ENCODE measurements at regions of chr1 and their contacts with region 1.

Region 1: GRCh38 chr1:168439456-168440375 is 104.1 kb downstream of the XCL2 start:
- DNase-seq: peak; percentile 87
- H3K4me3 ChIP-seq: peak overlapping the region in 2 of 4 donors; percentile 8 to 20
- H3K27ac ChIP-seq: peak overlapping the region in 1 of 4 donors; percentile 29
- H3K4me1 ChIP-seq: peaks cover 0 to 22% (median 10%) of the 10 kb centered on the region in 4 donors
- H3K27me3 ChIP-seq: no peaks in the 10 kb centered on the region
- CTCF ChIP-seq: peak; percentile 67 to 77 (median 72)
- EP300 ChIP-seq: no peak
- POLR2A ChIP-seq: no peak

Region 2: DNA sequence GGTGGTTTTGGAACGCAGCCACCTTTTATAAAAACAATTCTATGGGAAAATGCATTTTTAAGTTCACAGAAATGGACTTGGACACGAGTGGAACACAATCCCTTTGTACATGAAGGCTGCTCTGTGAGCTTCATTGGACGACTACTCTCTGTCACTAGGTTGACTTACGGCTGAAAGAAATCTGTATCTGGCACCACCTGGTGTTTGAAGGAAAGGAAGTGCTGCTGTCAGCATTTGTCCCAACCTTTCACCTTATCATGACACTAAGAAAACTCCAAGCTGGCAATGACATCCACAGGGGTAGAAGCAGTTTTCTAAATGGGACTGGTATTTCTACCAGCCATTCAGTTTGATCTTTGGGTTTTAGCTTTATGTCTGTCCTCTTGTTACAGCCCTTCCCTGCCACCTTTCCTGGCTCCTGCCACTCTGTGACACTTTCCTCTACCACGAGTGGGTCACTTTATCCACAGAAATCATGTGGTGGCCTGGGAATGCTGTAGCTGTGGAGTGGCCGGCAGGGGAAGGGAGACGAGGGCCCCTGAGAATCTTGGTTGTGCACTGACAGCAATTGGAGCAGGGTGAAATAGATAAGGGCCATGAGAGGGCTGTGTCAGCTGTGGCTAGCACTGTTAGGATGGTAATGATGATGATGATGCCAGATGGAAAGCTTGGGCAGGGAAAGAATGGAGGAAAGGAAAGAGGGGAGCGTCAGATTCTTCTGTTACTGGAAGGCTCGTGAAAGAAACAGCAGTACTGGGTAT is 73.8 kb before region 1 on chr1:
- intact Hi-C with region 1: no loop called
- DNase-seq: no peak
- H3K4me3 ChIP-seq: no peak overlapping the region
- H3K27ac ChIP-seq: no peak overlapping the region
- H3K4me1 ChIP-seq: peaks cover 0 to 10% (median 8%) of the 10 kb centered on the region in 4 donors
- H3K27me3 ChIP-seq: no peaks in the 10 kb centered on the region
- CTCF ChIP-seq: no peak
- EP300 ChIP-seq: no peak
- POLR2A ChIP-seq: no peak

Region 3: GRCh38 chr1:168535536-168535935 is 95.8 kb after region 1 on chr1:
- intact Hi-C with region 1: no loop called
- DNase-seq: no peak
- H3K4me3 ChIP-seq: no peak overlapping the region
- H3K27ac ChIP-seq: no peak overlapping the region
- H3K4me1 ChIP-seq: no peaks in the 10 kb centered on the region
- H3K27me3 ChIP-seq: no peaks in the 10 kb centered on the region
- CTCF ChIP-seq: no peak
- EP300 ChIP-seq: no peak
- POLR2A ChIP-seq: no peak

Region 4: DNA sequence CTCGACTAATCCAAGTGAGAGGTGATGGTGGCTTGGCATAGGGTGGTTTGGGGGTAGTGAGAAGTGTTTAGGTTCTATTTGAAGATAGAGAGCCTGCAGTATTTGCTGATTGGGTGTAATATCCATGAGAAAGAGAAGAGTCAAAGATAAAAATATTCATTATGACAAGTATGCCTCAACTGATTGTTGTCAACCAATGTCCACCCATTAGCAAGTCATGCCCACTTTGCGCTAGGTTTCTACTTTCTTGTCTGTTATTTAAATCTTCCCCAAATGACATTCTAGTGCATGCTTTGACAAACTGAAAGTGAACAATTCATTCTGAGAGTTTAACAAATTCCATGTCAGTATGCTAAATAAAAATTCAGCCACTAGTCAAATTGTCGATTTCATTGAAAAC is 132.9 kb after region 1 on chr1:
- intact Hi-C with region 1: loop called (anchors 5 kb)
- DNase-seq: no peak
- H3K4me3 ChIP-seq: no peak overlapping the region
- H3K27ac ChIP-seq: no peak overlapping the region
- H3K4me1 ChIP-seq: no peaks in the 10 kb centered on the region
- H3K27me3 ChIP-seq: no peaks in the 10 kb centered on the region
- CTCF ChIP-seq: no peak
- EP300 ChIP-seq: no peak
- POLR2A ChIP-seq: no peak

Region 5: DNA sequence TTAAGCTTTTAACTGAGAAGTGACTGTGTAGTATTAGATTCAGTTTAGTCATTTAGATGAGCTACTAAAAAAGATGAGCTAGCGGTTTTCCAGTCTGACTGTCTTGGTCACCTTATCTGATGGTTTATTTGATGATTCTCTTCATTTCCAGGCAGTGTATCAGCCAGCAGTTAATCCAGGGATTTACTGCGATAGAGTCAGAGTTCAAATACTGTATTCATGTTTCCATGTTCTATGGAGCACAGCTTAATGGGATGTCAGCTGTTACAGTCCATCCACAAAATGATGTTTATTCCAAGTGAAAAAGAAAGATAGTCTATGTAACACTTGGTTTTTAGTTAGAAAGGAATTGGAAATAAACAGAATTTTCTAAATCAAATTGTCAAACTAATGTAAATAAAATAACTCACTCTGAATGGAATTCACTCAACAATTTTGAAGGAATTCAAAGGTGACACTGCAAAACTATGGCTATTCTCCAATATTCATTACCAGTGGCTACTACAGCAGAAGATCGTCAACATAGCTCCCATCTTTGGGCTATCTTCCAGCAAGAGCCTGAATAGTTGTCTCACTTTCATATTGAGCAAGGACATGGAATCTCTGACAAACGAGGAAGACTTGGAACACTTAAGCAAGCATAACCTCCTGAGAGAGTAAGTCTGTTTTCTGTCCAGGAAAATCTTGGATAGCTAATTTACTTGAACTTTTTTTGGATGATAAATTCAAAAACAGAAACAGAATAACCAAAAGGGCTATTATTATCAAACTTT is 343.9 kb after region 1 on chr1:
- intact Hi-C with region 1: no loop called
- DNase-seq: peak; percentile 65
- H3K4me3 ChIP-seq: no peak overlapping the region
- H3K27ac ChIP-seq: peak overlapping the region; percentile 34 to 62 (median 58)
- H3K4me1 ChIP-seq: peaks cover 0 to 18% (median 7%) of the 10 kb centered on the region in 4 donors
- H3K27me3 ChIP-seq: no peaks in the 10 kb centered on the region
- CTCF ChIP-seq: no peak
- EP300 ChIP-seq: no peak
- POLR2A ChIP-seq: no peak

Region 6: GRCh38 chr1:169348383-169349036 is 908.8 kb after region 1 on chr1:
- intact Hi-C with region 1: loop called (anchors 10 kb)
- DNase-seq: no peak
- H3K4me3 ChIP-seq: no peak overlapping the region
- H3K27ac ChIP-seq: no peak overlapping the region
- H3K4me1 ChIP-seq: peaks cover 0 to 16% (median 3%) of the 10 kb centered on the region in 4 donors
- H3K27me3 ChIP-seq: no peaks in the 10 kb centered on the region
- CTCF ChIP-seq: peak; percentile 46 to 78 (median 68)
- EP300 ChIP-seq: no peak
- POLR2A ChIP-seq: no peak

Measured in sigmoid colon (tissue), 7 donors.